ENCODE measurements at regions of chr1 and their contacts with region 1.

Region 1: DNA sequence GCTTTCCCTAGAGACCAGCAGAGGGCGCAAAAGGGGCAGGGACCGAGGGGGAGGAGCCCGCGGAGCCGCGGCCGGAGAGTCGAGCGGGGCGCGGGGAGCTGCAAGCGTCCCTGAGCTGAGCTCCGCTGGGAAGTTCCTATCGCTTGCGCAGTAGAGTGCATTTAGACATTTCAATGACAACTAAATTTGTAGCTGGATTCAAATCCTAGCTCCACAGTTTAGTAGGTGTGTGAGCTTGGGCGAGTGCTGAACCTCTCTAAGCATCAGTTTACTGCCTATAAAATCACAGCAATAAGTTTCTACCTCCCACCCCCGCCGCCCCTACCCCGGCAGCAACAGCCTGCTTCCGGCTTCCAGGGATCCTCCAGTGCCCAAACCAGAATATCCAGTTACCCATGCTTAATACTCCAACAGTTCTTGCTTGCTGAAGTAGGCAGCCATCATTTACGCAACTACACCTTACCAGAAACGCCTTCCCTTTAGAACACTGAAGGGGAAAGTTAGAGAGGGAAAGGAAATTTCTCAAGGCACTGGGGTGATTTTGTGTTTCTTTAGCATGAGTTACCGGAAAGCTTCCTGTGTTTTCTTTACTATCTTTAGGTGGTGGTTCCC is 9.1 kb downstream of the TLR5 start:
- DNase-seq: peak; percentile 89
- H3K4me3 ChIP-seq: peak overlapping the region; percentile 31 to 39
- H3K27ac ChIP-seq: peak overlapping the region in 1 of 2 donors; percentile 6
- H3K4me1 ChIP-seq: peaks cover 7% of the 10 kb centered on the region
- H3K27me3 ChIP-seq: no peaks in the 10 kb centered on the region
- CTCF ChIP-seq: peak in 2 of 3 experiments; percentile 85 to 88
- POLR2A ChIP-seq: no peak

Region 2: DNA sequence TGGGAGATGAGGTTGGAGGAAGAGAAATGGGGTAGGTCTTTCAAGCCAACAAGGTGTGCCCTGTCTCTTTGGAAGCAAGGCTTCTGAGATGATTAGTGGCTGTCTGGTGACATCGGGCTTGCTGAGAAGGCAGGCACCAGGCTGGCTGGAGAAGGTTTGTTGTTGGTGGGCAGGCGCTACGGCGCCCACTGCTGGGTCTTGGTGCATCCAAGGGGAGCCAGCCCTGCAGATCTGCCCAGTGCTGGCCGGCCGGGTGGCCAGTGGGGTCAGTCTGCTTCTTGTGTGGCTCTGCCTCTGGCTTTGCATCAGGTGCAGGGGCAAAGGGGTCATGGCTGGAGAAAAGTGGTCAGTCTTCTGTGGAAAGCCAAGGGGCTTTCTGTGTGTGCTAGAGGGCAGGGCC is 117.0 kb before region 1 on chr1:
- intact Hi-C with region 1: no loop called
- DNase-seq: no peak
- H3K4me3 ChIP-seq: no peak overlapping the region
- H3K27ac ChIP-seq: no peak overlapping the region
- H3K4me1 ChIP-seq: no peaks in the 10 kb centered on the region
- H3K27me3 ChIP-seq: no peaks in the 10 kb centered on the region
- CTCF ChIP-seq: no peak
- POLR2A ChIP-seq: no peak

Region 3: DNA sequence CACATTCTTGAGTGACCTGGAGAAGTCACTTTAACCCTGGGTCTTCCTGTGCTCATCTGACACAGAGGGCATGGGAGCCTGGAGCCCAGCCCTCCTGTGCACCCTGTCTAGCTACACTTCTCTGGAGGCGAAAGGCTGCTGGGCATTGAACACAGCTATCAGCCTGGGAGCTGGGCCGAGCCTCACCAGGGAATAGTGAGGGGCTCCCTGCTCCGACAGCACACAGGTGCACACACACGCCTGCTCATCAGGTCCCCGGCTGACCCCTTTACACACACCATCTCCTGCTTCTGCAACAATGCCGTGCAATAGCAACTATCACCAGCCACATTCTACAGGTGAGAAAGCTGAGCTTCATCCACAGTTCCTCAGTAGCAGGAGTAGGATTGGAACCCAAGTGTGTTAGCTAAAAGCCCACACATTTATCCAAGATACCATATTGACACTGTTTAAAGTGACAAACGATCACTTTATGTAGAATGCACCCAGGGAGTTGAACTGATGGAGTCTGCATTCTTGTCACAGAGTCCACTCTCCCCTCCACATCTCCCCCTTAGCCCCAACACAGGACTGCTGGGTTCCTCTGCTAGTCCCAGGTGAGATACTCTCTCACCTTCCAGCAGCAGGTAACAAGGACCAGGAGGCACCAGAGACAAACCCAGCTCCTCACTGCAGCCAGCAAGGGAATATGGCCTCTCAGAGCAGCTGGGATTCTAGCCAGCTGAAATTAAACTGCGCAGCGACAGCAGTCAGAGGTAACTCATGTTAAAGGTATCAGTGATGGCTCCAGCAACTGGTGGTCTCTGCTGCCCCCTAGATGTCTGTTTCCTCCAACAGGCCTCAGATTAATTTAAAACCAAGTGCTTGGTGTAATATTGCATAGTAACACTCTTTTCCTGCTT is 549.9 kb after region 1 on chr1:
- intact Hi-C with region 1: loop called (anchors 10 kb)
- DNase-seq: peak; percentile 67
- H3K4me3 ChIP-seq: no peak overlapping the region
- H3K27ac ChIP-seq: no peak overlapping the region
- H3K4me1 ChIP-seq: no peaks in the 10 kb centered on the region
- H3K27me3 ChIP-seq: no peaks in the 10 kb centered on the region
- CTCF ChIP-seq: peak; percentile 51 to 61 (median 53)
- POLR2A ChIP-seq: no peak